SK-N-SH (cell line): ENCODE measurements at regions of chr17 and their contacts with region 1.

Region 1: DNA sequence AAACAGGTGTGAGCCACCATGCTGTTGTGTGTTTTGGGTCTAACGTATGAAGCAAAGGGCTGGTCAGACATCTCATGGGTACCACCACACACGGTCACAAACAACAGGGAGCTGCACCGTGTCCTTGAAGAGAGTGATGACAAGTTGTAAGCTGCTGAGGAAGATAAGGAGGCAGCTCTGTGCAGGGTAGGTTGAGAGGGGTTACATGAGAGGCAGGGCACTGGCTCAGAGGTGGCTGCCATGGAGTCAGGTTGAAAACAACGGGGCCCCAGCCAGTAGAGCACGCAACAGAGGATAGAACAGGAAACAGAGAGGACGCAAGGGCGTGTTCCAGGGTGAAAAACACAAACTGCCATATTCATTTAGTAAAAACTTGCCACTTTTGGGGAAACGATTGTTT is 52.2 kb downstream of the TRARG1 start:
- DNase-seq: no peak
- H3K4me3 ChIP-seq: no peak overlapping the region
- H3K27ac ChIP-seq: no peak overlapping the region
- H3K4me1 ChIP-seq: no peaks in the 10 kb centered on the region
- H3K27me3 ChIP-seq: no peaks in the 10 kb centered on the region
- CTCF ChIP-seq: no peak
- EP300 ChIP-seq: no peak
- RAD21 ChIP-seq: no peak

Region 2: GRCh38 chr17:1260086-1260769 is 71.5 kb before region 1 on chr17:
- CTCF ChIA-PET with region 1: interaction called, 32 read pairs
- POLR2A ChIA-PET with region 1: no interaction called
- DNase-seq: peak; percentile 51
- H3K4me3 ChIP-seq: peak overlapping the region; percentile 44 to 91
- H3K27ac ChIP-seq: no peak overlapping the region
- H3K4me1 ChIP-seq: no peaks in the 10 kb centered on the region; a peak in 1 of 4 replicates
- H3K27me3 ChIP-seq: no peaks in the 10 kb centered on the region
- CTCF ChIP-seq: no peak
- EP300 ChIP-seq: no peak
- RAD21 ChIP-seq: no peak

Region 3: GRCh38 chr17:1267471-1267947 is 64.2 kb before region 1 on chr17:
- CTCF ChIA-PET with region 1: interaction called, 32 read pairs
- POLR2A ChIA-PET with region 1: no interaction called
- DNase-seq: peak; percentile 28
- H3K4me3 ChIP-seq: peak overlapping the region; percentile 64 to 83
- H3K27ac ChIP-seq: peak overlapping the region in 1 of 2 experiments; percentile 27; a peak in 2 of 4 replicates
- H3K4me1 ChIP-seq: peaks cover 0 to 4% of the 10 kb centered on the region in 2 experiments; a peak in 1 of 4 replicates
- H3K27me3 ChIP-seq: 0 out of 2 replicates have a peak, but pooled peaks cover 4% of the 10 kb centered on the region
- CTCF ChIP-seq: no peak
- EP300 ChIP-seq: no peak
- RAD21 ChIP-seq: no peak

Region 4: GRCh38 chr17:1275962-1276736 is 55.6 kb before region 1 on chr17:
- CTCF ChIA-PET with region 1: interaction called, 17 read pairs
- POLR2A ChIA-PET with region 1: no interaction called
- DNase-seq: peak; percentile 90
- H3K4me3 ChIP-seq: peak overlapping the region in 1 of 2 experiments; percentile 14; a peak in 1 of 4 replicates
- H3K27ac ChIP-seq: no peak overlapping the region
- H3K4me1 ChIP-seq: no peaks in the 10 kb centered on the region
- H3K27me3 ChIP-seq: peaks cover 44% of the 10 kb centered on the region
- CTCF ChIP-seq: peak; percentile 83
- EP300 ChIP-seq: no peak
- RAD21 ChIP-seq: peak; percentile 83

Region 5: GRCh38 chr17:1298606-1299005 is 33.1 kb before region 1 on chr17:
- CTCF ChIA-PET with region 1: interaction called, 14 read pairs
- POLR2A ChIA-PET with region 1: no interaction called
- DNase-seq: no peak
- H3K4me3 ChIP-seq: no peak overlapping the region
- H3K27ac ChIP-seq: no peak overlapping the region
- H3K4me1 ChIP-seq: no peaks in the 10 kb centered on the region; a peak in 1 of 4 replicates
- H3K27me3 ChIP-seq: peaks cover 24% of the 10 kb centered on the region
- CTCF ChIP-seq: no peak
- EP300 ChIP-seq: no peak
- RAD21 ChIP-seq: no peak

Region 6: GRCh38 chr17:1351971-1352370 is 20.3 kb after region 1 on chr17:
- CTCF ChIA-PET with region 1: interaction called, 10 read pairs
- POLR2A ChIA-PET with region 1: no interaction called
- DNase-seq: no peak
- H3K4me3 ChIP-seq: no peak overlapping the region
- H3K27ac ChIP-seq: no peak overlapping the region
- H3K4me1 ChIP-seq: no peaks in the 10 kb centered on the region
- H3K27me3 ChIP-seq: no peaks in the 10 kb centered on the region
- CTCF ChIP-seq: no peak
- EP300 ChIP-seq: no peak
- RAD21 ChIP-seq: no peak

Region 7: DNA sequence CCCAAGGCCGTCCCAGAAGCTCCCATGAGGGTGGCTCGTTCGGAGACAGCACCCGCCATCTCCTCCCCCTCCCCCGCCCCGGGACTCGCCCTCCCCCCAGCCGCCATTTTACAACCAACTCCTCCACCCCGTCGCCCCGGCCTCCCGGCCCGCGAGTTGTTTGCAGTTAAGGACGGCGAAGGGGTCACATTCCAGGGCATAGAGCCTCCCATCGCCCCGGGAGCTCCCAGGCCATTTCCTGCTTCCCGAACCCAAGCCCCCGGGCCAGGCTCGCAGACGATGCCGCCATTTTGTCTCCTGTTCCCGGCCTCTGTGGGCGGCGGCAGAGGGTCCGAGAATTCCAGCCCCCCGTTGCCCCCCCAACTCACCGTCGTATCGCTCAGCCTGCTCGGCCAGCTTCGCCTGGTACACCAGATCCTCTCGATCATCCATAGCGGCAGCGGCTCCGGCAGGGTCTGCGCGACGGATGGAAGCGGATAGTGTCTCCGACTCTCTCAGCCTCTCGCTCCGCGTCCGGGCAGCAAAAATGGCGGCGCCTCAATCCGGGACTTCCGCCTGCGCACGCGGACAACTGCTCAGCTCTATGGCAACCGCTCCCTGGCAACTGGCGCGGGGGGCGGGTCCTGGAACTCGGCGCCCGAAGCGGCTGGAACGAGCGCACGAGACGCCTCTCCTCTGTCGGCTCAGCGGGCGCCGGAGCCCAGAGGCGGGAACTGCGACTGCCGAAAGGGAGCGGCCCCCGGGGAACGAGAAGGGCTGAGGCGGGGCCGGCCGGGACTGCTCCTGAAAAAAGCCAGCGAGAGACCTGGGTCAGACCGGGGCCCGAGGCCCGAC is 68.2 kb after region 1 on chr17 and contains the start of gene YWHAE:
- CTCF ChIA-PET with region 1: no interaction called
- POLR2A ChIA-PET with region 1: no interaction called
- DNase-seq: peak; percentile 96
- H3K4me3 ChIP-seq: peak within 1 kb of the TSS; percentile 68 to 99
- H3K27ac ChIP-seq: peak within 1 kb of the TSS; percentile 97
- H3K4me1 ChIP-seq: peaks cover 0 to 4% of the 10 kb centered on the region in 2 experiments; a peak in 2 of 4 replicates
- H3K27me3 ChIP-seq: no peaks in the 10 kb centered on the region
- CTCF ChIP-seq: no peak
- EP300 ChIP-seq: no peak
- RAD21 ChIP-seq: no peak
- polyA plus RNA-seq, gene YWHAE: 812 and 1,023 TPM in 2 replicates

Region 8: DNA sequence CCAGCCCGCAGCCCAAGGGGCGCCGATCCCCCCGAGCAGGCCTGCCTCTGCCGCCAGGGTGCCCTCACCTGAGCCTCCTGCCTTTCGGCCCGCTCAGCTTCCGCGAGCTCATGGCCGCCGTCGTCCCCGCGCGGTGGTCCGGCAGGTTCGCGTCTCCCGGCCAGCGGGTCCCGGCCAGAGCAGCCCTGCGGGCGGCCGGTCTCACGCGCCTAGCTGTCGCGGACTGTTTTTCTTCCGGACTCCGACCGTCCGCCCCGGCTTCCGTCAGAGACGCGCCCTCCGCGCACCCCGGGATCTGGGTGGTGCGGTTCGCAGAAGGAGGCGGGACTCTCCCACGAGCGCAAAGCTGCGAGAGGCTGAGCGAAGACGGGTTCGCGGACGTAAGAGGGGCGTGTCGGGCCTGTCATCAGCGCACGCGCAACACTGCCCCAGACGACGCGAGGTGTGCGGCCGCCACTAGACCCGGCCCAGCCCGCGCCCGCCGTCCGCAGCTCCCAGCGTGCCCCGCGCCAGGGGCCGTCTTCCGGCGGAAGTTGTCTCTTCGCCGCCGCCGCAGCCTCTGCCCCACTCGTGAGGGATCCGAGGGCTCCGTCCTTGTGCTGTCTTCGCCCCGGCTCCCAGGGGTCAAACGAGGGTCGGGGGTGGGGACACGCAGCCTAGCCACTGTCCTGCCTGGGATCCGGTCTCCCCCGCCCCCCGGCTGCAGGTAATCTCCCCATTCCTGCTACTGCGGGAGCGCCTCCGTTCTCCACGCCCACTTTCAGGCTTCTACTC is 184.9 kb after region 1 on chr17 and contains the start of gene INPP5K:
- CTCF ChIA-PET with region 1: interaction called, 12 read pairs
- POLR2A ChIA-PET with region 1: no interaction called
- DNase-seq: peak; percentile 99
- H3K4me3 ChIP-seq: peak within 1 kb of the TSS; percentile 100
- H3K27ac ChIP-seq: peak within 1 kb of the TSS; percentile 78 to 86
- H3K4me1 ChIP-seq: peaks cover 0 to 19% of the 10 kb centered on the region in 2 experiments; a peak in 2 of 4 replicates
- H3K27me3 ChIP-seq: no peaks in the 10 kb centered on the region
- CTCF ChIP-seq: no peak
- EP300 ChIP-seq: no peak; a peak in 1 of 4 replicates
- RAD21 ChIP-seq: no peak
- polyA plus RNA-seq, gene INPP5K: 26.2 and 28.6 TPM in 2 replicates